ENCODE measurements at regions of chr11 and their contacts with region 1.

Region 1: DNA sequence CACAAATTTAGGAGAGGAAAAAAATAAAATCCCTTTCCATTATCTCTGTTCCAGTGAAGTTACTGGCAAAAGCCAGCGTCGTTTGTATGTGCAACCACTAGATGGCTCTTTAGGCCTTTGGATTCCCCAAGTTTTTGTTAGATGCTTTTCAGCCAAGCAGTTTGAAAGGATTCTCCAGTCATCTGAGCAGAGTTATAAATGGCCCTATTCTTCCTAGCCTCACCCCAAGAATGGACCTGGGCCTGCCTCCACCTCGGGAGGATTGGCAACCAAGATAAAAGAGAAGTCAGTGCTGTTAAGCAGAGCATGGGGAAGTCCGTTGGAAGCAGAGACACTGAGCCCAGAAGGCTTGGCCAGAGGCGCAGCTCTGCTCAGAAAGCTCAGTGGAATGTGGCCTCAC is 15.4 kb downstream of the FAM181B start:
- H3K4me3 Mint-ChIP-seq: no peak overlapping the region
- H3K27ac Mint-ChIP-seq: no peak overlapping the region
- H3K4me1 Mint-ChIP-seq: no peaks in the 10 kb centered on the region
- H3K27me3 Mint-ChIP-seq: peaks cover 2% of the 10 kb centered on the region

Region 2: DNA sequence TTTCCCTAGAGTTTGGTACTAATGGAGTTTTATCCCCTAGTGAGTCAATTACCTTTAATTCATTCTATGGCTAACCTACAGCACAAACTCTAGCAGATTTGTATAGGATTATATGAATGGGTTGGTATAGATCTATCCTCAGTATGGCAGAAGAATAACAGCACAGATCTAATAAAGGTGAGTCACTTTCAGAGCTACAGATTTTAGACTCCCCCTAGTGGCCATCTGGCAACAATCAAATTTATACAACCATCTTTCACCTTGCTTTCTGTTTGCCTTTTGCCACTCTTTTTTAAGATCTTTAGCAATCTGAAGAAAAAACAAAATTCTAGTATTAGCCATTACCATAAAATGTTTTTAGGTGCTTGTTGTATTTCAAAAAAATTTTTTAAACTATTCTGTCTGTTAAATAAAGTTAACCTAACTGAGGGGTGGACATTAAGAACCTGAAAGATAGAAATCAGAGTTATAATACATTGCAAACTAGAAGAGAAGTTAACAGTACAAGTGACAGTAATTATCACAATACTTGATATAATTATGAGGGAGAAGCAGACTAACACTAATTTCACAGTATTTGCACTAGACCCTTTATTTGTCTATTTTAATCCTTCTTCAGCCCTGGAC is 209.1 kb after region 1 on chr11:
- intact Hi-C with region 1: loop called (anchors 10 kb)
- H3K4me3 Mint-ChIP-seq: no peak overlapping the region
- H3K27ac Mint-ChIP-seq: no peak overlapping the region
- H3K4me1 Mint-ChIP-seq: no peaks in the 10 kb centered on the region
- H3K27me3 Mint-ChIP-seq: no peaks in the 10 kb centered on the region

Region 3: GRCh38 chr11:83249972-83250593 is 531.8 kb after region 1 on chr11:
- intact Hi-C with region 1: loop called (anchors 5 kb)
- H3K4me3 Mint-ChIP-seq: no peak overlapping the region
- H3K27ac Mint-ChIP-seq: no peak overlapping the region
- H3K4me1 Mint-ChIP-seq: no peaks in the 10 kb centered on the region
- H3K27me3 Mint-ChIP-seq: no peaks in the 10 kb centered on the region